CD4-positive, alpha-beta memory T cell (primary cell): ENCODE measurements at regions of chr2 and their contacts with region 1.

Region 1: GRCh38 chr2:47471429-47472116 is 68.6 kb downstream of the MSH2 start:
- DNase-seq: no peak
- H3K4me3 ChIP-seq: no peak overlapping the region
- H3K4me3 Mint-ChIP-seq: no peak overlapping the region
- H3K27ac ChIP-seq: no peak overlapping the region
- H3K27ac Mint-ChIP-seq: no peak overlapping the region
- H3K4me1 ChIP-seq: no peaks in the 10 kb centered on the region
- H3K4me1 Mint-ChIP-seq: no peaks in the 10 kb centered on the region
- H3K27me3 ChIP-seq: no peaks in the 10 kb centered on the region
- H3K27me3 Mint-ChIP-seq: no peaks in the 10 kb centered on the region

Region 2: DNA sequence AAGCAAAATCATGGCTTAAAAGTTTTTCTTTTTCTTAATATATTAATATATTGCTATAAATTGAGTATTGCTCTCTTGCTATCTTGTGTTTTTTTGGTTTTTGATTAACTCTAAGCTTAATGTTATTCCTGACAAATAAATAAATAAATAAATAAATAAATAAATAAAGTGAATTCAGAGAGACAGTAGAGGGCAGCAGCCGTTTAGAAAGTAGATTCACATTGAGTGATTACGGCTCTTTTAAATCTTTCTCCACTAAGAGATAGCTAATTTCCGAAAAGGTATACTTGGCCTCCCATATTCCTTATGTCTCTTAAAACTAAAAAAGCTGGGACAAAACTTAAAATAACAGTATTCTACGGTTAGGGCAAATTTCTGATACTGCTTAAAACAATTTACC is 34.3 kb before region 1 on chr2:
- CTCF ChIA-PET with region 1: no interaction called
- POLR2A ChIA-PET with region 1: no interaction called
- intact Hi-C with region 1: loop called (anchors 1 kb)
- DNase-seq: peak in 1 of 5 donors; percentile 3
- H3K4me3 ChIP-seq: no peak overlapping the region
- H3K4me3 Mint-ChIP-seq: no peak overlapping the region
- H3K27ac ChIP-seq: no peak overlapping the region
- H3K27ac Mint-ChIP-seq: no peak overlapping the region
- H3K4me1 ChIP-seq: no peaks in the 10 kb centered on the region
- H3K4me1 Mint-ChIP-seq: peaks cover 0 to 2% (median 2%) of the 10 kb centered on the region in 4 donors
- H3K27me3 ChIP-seq: no peaks in the 10 kb centered on the region
- H3K27me3 Mint-ChIP-seq: no peaks in the 10 kb centered on the region

Region 3: DNA sequence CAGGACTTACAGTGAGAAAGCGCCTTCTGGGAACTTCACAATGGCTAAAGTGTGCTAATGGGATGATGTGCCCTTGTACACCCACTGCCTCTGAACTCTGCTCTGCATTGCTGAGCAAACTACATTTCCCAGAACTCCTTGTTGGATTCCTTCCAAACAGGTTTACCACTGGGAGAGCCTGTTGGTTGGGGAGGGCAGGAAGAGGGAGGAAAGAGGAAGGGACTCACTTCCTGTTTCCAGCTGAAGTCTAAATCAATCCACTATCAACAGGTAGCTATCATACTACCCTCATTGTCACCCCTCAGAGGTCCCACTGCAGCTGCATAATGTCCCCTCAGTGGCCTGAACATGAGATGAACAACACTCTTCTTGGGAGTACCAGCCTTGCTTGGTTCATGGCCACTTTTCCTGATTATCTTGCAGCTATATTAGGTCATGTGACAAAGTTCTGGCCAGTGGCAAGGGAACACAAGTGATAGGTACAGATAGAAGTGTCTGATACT is 41.1 kb after region 1 on chr2:
- CTCF ChIA-PET with region 1: no interaction called
- POLR2A ChIA-PET with region 1: no interaction called
- intact Hi-C with region 1: no loop called
- DNase-seq: no peak
- H3K4me3 ChIP-seq: no peak overlapping the region
- H3K4me3 Mint-ChIP-seq: no peak overlapping the region
- H3K27ac ChIP-seq: no peak overlapping the region
- H3K27ac Mint-ChIP-seq: no peak overlapping the region
- H3K4me1 ChIP-seq: no peaks in the 10 kb centered on the region
- H3K4me1 Mint-ChIP-seq: peaks cover 0 to 4% (median under 1%) of the 10 kb centered on the region in 4 donors
- H3K27me3 ChIP-seq: no peaks in the 10 kb centered on the region
- H3K27me3 Mint-ChIP-seq: peaks cover 0 to 3% of the 10 kb centered on the region in 2 donors

Region 4: GRCh38 chr2:47735136-47735869 is 263.7 kb after region 1 on chr2:
- CTCF ChIA-PET with region 1: no interaction called
- POLR2A ChIA-PET with region 1: no interaction called
- intact Hi-C with region 1: no loop called
- DNase-seq: no peak
- H3K4me3 ChIP-seq: no peak overlapping the region
- H3K4me3 Mint-ChIP-seq: no peak overlapping the region
- H3K27ac ChIP-seq: no peak overlapping the region
- H3K27ac Mint-ChIP-seq: no peak overlapping the region
- H3K4me1 ChIP-seq: no peaks in the 10 kb centered on the region
- H3K4me1 Mint-ChIP-seq: no peaks in the 10 kb centered on the region
- H3K27me3 ChIP-seq: no peaks in the 10 kb centered on the region
- H3K27me3 Mint-ChIP-seq: peaks cover 0 to 3% of the 10 kb centered on the region in 2 donors